ENCODE measurements at regions of chr3 and their contacts with region 1.

Region 1: DNA sequence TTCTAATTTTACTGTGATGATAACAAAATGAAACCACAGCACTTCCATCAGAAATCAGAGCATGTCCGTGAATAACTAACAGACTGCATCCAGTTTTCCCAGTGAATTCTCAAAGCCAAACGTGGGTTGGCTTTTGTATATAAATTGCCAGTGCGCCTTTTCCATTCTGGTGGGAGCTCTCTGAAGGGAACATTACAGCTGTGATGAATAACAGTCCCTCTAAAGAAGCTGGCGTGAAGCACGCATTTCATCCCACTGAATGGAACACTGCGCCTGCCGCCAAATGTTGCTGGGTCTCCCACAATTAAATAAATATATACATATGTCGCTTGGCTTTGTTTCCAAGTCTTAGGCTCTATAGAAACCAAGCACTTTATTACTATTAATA is 113.0 kb upstream of the PFN2 start:
- DNase-seq: peak; percentile 80
- H3K4me3 ChIP-seq: peak overlapping the region in 3 of 4 donors; percentile 26 to 40 (median 33)
- H3K27ac ChIP-seq: peak overlapping the region; percentile 18 to 77 (median 74)
- H3K4me1 ChIP-seq: peaks cover 0 to 33% (median 28%) of the 10 kb centered on the region in 4 donors
- H3K27me3 ChIP-seq: no peaks in the 10 kb centered on the region
- CTCF ChIP-seq: no peak
- EP300 ChIP-seq: peak in 2 of 4 donors; percentile 44 to 53
- POLR2A ChIP-seq: no peak

Region 2: DNA sequence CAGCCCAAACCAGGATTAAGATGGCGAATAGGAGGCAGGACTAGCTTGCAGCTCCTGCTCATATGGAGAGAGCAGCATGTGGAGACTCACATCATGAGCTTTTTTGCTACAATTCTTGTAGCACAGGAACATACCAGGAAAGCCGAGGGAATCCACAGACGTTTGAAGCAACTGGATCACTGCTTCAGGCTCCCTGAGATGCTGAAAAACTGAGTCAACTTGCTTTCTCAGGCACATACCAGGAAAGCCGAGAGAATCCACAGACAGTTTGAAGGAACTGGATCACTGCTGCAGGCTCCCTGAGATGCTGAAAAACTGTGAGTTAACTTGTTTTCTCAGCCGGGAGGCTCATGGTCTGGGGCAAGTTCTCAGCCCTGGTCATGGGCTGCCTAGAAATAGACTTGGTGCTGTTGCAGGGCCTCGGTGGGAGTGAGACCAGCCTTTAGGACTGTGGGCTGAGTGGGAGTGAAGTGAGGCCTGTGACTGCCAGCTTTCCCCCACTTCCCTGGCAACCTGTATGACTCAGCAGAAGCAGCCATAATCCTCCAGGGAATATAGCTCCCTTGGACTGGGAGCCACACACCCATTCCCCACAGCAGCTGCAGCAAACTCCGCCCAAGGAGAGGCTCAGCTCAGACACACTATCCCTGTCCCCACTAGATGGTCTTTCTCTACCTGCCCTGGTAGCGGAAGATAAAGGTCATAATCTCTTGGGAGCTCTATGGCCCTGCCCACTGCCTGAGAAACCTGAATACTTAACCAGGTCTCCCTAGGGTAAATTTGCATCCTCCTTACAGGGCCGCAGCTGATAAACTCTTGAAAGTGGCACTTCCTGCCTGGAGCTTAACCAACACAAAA is 61.0 kb before region 1 on chr3:
- intact Hi-C with region 1: no loop called
- DNase-seq: no peak
- H3K4me3 ChIP-seq: no peak overlapping the region
- H3K27ac ChIP-seq: no peak overlapping the region
- H3K4me1 ChIP-seq: no peaks in the 10 kb centered on the region
- H3K27me3 ChIP-seq: no peaks in the 10 kb centered on the region
- CTCF ChIP-seq: no peak
- EP300 ChIP-seq: no peak
- POLR2A ChIP-seq: no peak

Region 3: DNA sequence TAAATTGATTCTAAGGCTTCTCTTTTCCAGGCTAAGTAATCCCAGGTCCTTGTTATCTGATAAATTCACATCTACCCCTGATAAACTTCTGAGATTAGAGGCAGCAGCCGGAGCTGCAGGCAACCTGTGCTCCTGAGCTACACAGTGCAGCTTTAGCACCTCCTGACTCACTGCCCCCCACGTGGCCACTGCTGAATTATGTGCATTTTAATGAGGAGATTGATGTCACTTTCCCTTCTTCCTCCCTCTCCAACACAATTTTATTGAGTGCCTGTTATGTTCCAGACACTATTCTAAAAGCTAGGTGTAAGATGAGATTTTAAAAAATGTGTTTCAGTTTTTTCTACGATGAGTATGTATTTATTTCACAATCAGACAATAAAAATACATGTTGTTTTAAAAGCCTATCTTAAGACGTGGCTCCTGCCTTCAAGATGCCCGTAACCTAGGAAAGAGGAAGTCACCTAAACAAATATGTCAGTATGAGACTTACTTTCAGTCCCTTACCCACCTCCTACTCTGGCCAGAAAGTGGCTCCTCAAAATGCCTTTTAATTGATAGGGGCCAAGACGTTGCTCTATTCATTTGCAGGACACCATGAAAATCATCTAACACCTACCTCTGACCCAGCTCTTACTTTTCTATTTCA is 48.6 kb after region 1 on chr3:
- intact Hi-C with region 1: no loop called
- DNase-seq: no peak
- H3K4me3 ChIP-seq: no peak overlapping the region
- H3K27ac ChIP-seq: no peak overlapping the region
- H3K4me1 ChIP-seq: peaks cover 0 to 6% (median 0%) of the 10 kb centered on the region in 4 donors
- H3K27me3 ChIP-seq: no peaks in the 10 kb centered on the region
- CTCF ChIP-seq: no peak
- EP300 ChIP-seq: no peak
- POLR2A ChIP-seq: no peak

Region 4: DNA sequence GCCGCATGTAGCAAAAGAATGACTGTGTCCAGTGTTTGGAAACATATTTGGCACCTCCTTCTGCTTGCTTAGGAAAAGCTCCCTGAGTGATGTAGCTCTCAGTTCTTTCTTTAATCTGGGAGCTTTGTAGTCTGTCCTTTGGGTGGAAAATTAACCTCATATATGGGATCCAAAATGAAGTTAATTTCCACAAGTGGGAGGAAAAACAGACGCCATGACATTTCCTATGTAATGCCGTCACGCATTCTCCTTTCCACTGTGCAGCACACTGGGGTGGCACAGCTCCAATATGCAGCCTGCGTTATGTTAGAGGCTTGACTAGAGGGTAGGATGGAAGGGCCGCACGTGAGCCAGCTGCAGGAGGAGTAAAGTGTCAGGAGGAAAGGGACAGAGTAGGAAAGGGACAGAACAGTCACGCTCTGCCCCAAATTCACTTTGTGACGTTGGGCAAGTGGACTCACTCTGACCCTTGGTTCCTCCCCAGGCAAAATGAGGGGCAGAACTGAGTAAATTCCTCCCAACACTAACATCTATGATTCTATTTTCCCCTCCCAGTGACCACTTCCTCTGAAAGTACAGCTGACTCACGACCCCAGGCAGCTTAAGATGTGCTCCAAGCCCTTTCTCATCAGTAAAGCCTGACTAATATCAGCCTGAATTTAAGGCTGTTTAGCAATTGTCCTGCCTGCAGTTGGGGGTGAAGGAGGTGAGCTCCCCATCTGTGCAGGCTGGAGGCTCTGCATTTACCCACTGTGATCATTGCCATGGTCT is 63.5 kb after region 1 on chr3:
- intact Hi-C with region 1: loop called (anchors 2 kb)
- DNase-seq: peak; percentile 92
- H3K4me3 ChIP-seq: no peak overlapping the region
- H3K27ac ChIP-seq: peak overlapping the region in 3 of 4 donors; percentile 66 to 78 (median 74)
- H3K4me1 ChIP-seq: peaks cover 0 to 40% (median 24%) of the 10 kb centered on the region in 4 donors
- H3K27me3 ChIP-seq: no peaks in the 10 kb centered on the region
- CTCF ChIP-seq: no peak
- EP300 ChIP-seq: peak; percentile 72 to 95 (median 90)
- POLR2A ChIP-seq: no peak

Region 5: DNA sequence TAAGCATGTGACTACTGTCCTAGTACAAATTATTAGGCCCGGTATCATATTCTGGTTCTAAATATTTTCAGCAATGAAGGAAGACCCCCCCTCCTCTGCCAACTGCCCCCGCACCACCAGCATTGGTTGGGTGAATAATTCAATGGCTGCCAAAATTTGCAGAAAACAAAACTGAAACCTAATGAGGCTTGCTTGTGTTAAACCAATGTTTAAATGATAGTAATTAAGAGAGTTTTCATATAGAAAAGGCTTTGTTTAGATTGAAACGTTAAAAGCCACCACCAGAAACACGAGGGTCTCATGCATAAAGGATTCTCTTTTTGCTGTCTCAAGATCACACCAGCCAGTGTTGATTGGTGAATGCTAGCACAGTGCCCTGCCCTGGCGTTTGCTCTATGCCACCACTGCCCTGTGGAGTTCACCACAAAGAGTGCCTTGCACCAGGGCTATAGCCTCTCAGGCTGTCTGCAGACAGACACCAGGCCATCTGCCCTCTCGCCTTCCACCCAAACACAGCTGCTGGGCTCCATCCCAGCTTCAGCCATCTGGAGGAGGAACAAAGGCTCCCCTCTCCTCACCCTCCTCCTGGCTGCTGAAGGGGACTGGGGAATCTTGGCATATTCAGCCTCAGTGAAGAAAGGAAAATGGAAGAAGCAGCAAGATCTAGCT is 87.3 kb after region 1 on chr3:
- intact Hi-C with region 1: loop called (anchors 10 kb)
- DNase-seq: peak; percentile 65
- H3K4me3 ChIP-seq: no peak overlapping the region
- H3K27ac ChIP-seq: peak overlapping the region in 1 of 4 donors; percentile 25
- H3K4me1 ChIP-seq: peaks cover 0 to 30% (median 25%) of the 10 kb centered on the region in 4 donors
- H3K27me3 ChIP-seq: no peaks in the 10 kb centered on the region
- CTCF ChIP-seq: no peak
- EP300 ChIP-seq: no peak
- POLR2A ChIP-seq: no peak

Region 6: DNA sequence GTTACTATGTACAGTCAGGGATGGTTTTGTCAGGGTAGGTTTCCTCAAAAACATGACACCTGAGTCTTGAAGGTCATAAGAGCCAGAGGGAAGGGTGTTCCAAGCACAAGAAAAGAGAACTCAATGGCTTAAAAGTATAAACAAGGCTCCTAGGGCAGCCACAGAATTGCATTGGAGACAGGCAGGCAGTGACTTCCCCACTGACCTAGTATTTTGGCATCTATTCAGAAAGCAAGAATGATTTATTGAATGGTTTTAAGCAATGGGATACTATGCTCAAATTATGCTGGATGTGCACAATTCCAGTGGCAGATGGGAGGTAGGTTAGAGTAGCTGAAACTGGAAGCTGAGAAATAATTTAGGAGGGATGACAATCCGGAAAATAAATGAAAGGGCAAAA is 378.5 kb after region 1 on chr3:
- intact Hi-C with region 1: no loop called
- DNase-seq: no peak
- H3K4me3 ChIP-seq: no peak overlapping the region
- H3K27ac ChIP-seq: no peak overlapping the region
- H3K4me1 ChIP-seq: no peaks in the 10 kb centered on the region
- H3K27me3 ChIP-seq: no peaks in the 10 kb centered on the region
- CTCF ChIP-seq: no peak
- EP300 ChIP-seq: no peak
- POLR2A ChIP-seq: no peak